Heart right ventricle (tissue), 16 donors: ENCODE measurements at regions of chr6 and their contacts with region 1.

Region 1: GRCh38 chr6:82144007-82144851 is 103.3 kb downstream of the IBTK start:
- DNase-seq: peak in 1 of 2 donors; percentile 53
- ATAC-seq: peak; percentile 64 to 96 (median 88)
- H3K4me3 ChIP-seq: peak overlapping the region in 1 of 10 donors; percentile 2
- H3K27ac ChIP-seq: peak overlapping the region; percentile 67 to 90 (median 87)
- H3K4me1 ChIP-seq: peaks cover 0 to 31% (median 25%) of the 10 kb centered on the region in 9 donors
- H3K27me3 ChIP-seq: no peaks in the 10 kb centered on the region
- CTCF ChIP-seq: no peak

Region 2: DNA sequence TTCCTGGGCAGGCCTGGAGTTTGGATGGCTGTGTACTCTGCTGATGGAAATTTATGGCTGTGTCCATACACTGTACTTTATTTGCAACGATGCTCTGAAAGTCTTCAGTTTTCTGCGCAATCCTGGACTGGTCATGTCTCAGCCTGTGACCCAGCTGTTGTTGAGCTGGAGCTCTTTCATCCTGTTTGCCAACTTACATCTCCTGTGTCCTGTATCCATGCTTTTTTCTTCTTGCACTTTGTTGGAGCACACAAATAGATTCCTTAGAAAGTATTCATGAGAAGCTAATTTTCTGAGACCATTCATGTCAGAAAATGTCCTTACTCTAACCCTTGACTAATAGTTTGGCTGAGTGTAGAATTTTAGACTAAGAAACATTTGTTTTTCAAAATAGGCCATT is 1786.6 kb before region 1 on chr6:
- intact Hi-C with region 1: loop called in 1 of 10 experiments (anchors 10 kb)
- DNase-seq: no peak
- ATAC-seq: peak in 7 of 8 donors; percentile 33 to 83 (median 53)
- H3K4me3 ChIP-seq: no peak overlapping the region
- H3K27ac ChIP-seq: no peak overlapping the region
- H3K4me1 ChIP-seq: no peaks in the 10 kb centered on the region
- H3K27me3 ChIP-seq: no peaks in the 10 kb centered on the region
- CTCF ChIP-seq: no peak

Region 3: DNA sequence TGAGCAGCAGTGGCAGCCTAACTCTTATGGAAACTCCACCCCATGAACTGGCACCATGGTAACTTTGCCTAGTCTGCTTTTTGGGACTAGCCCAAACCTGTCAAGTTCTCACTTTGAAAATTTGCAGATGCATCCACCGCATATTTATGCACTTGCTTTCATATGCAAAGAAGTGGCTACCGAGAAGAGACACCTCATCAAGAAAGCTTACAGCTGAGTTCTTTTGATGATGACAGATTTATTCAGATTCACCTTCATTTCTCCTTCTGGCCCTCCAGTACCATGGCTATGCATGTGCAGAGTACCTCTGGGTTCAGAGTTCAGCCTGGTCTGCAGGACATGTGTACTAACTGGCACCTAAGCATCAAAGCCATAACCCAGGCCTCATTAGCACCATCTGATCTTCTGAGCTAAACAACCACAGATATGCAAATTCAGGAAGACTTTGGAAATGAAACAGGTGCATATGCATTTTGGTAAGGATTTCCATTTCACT is 237.5 kb before region 1 on chr6:
- intact Hi-C with region 1: loop called in 1 of 10 experiments (anchors 10 kb)
- DNase-seq: peak in 1 of 2 donors; percentile 37
- ATAC-seq: peak in 7 of 8 donors; percentile 49 to 76 (median 71)
- H3K4me3 ChIP-seq: no peak overlapping the region
- H3K27ac ChIP-seq: peak overlapping the region in 8 of 10 donors; percentile 4 to 71 (median 50)
- H3K4me1 ChIP-seq: peaks cover 0 to 32% (median 7%) of the 10 kb centered on the region in 9 donors
- H3K27me3 ChIP-seq: no peaks in the 10 kb centered on the region
- CTCF ChIP-seq: no peak